Lower leg skin (tissue), 4 donors: ENCODE measurements at regions of chr10 and their contacts with region 1.

Region 1: GRCh38 chr10:102583435-102584417 is 60.6 kb upstream of the TRIM8 start:
- DNase-seq: peak; percentile 84 to 96
- H3K4me3 ChIP-seq: no peak overlapping the region
- CTCF ChIP-seq: peak in 1 of 3 donors; percentile 59
- POLR2A ChIP-seq: no peak

Region 2: DNA sequence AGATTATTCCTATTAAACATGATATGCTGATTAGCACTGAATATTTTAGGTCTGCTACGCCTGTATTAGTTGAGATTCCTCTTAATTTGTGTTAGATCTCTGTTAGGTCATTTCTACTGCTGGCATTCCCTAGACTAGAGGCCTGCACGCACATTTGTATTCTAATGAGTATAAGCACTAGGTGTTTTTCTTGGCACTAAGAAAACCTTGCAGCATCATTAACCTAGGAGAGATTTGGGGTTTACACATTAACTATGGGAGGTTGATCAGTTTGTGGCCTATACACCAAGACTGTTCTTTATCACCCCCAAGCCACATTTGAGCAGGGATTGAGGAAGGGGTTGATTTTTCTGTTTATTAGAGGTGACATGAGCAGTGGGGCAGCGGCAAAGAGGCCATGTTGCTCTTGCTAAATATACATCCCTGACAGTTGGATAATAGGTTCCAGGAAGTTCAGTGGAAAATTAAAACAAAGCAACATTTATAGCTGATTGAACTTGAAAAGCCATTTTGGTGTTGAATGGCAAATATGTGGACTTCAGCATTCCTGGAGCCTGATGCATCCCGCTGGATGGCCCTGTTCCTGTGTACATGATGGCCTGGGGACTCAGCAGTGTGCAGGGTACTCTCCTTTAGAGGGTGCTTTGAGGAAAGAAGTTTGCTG is 273.2 kb before region 1 on chr10:
- intact Hi-C with region 1: no loop called
- DNase-seq: no peak
- H3K4me3 ChIP-seq: no peak overlapping the region
- CTCF ChIP-seq: no peak
- POLR2A ChIP-seq: no peak

Region 3: DNA sequence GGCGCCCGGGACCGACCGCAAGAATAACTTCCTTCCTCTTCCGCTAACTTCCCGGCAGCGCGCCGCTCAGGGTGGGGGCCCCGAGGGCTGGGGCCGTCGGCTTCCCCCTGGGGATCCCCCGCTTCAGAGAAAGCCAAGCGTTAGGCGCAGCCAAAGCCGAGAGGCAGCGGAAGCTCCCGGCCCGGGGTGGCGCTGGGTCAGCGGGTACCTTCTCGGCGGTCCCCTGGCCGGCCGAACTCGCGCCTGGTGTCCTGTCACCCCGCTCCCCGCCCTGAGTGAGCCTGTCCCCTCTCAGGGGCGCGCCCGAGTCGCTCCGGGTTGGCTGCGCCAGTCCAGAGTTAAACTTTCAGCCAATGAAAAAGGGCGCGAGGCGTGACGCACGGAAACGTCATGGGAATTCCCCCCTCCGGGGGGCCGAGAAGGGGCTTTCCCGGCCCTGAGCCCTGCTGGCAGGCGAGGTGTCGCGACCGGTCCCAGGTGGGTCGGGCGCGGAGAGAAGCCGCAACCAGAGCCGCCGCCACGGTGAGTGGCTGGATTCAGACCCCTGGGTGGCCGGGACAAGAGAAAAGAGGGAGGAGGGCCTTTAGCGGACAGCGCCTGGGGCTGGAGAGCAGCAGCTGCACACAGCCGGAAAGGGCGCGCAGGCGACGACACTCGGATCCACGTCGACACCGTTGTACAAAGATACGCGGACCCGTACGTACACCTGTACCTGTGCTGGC is 189.5 kb before region 1 on chr10:
- intact Hi-C with region 1: loop called (anchors 10 kb)
- DNase-seq: peak; percentile 91 to 99
- H3K4me3 ChIP-seq: peak overlapping the region; percentile 63
- CTCF ChIP-seq: peak in 1 of 3 donors; percentile 93
- POLR2A ChIP-seq: no peak

Region 4: GRCh38 chr10:102503281-102504220 is 80.2 kb before region 1 on chr10 and contains the start of gene SUFU:
- intact Hi-C with region 1: loop called (anchors 2 kb)
- DNase-seq: peak; percentile 98 to 99
- H3K4me3 ChIP-seq: peak within 1 kb of the TSS; percentile 71
- CTCF ChIP-seq: peak in 1 of 3 donors; percentile 71
- POLR2A ChIP-seq: no peak
- total RNA-seq, gene SUFU: 15.8 to 19.8 (median 18.0) TPM